ENCODE measurements at regions of chr11 and their contacts with region 1.

Region 1: GRCh38 chr11:77705195-77705876 is 67.7 kb upstream of the CLNS1A start:
- DNase-seq: peak in 4 of 7 donors; percentile 25 to 44 (median 30)
- H3K4me3 ChIP-seq: no peak overlapping the region
- H3K27ac ChIP-seq: peak overlapping the region in 3 of 5 donors; percentile 8 to 61 (median 54)
- H3K4me1 ChIP-seq: peaks cover 12 to 25% of the 10 kb centered on the region in 2 donors
- H3K27me3 ChIP-seq: no peaks in the 10 kb centered on the region
- CTCF ChIP-seq: no peak
- POLR2A ChIP-seq: no peak

Region 2: GRCh38 chr11:77752518-77752917 is 47.2 kb after region 1 on chr11:
- intact Hi-C with region 1: loop called in 1 of 2 experiments (anchors 10 kb)
- DNase-seq: peak; percentile 68 to 88 (median 82)
- H3K4me3 ChIP-seq: peak overlapping the region in 1 of 4 donors; percentile 23
- H3K27ac ChIP-seq: peak overlapping the region in 3 of 5 donors; percentile 30 to 62 (median 47)
- H3K4me1 ChIP-seq: peaks cover 24 to 66% of the 10 kb centered on the region in 2 donors
- H3K27me3 ChIP-seq: no peaks in the 10 kb centered on the region
- CTCF ChIP-seq: no peak
- POLR2A ChIP-seq: peak in 1 of 2 donors; percentile 18

Measured in adrenal gland (tissue), 19 donors.